ENCODE measurements at regions of chr3 and their contacts with region 1.

Region 1: DNA sequence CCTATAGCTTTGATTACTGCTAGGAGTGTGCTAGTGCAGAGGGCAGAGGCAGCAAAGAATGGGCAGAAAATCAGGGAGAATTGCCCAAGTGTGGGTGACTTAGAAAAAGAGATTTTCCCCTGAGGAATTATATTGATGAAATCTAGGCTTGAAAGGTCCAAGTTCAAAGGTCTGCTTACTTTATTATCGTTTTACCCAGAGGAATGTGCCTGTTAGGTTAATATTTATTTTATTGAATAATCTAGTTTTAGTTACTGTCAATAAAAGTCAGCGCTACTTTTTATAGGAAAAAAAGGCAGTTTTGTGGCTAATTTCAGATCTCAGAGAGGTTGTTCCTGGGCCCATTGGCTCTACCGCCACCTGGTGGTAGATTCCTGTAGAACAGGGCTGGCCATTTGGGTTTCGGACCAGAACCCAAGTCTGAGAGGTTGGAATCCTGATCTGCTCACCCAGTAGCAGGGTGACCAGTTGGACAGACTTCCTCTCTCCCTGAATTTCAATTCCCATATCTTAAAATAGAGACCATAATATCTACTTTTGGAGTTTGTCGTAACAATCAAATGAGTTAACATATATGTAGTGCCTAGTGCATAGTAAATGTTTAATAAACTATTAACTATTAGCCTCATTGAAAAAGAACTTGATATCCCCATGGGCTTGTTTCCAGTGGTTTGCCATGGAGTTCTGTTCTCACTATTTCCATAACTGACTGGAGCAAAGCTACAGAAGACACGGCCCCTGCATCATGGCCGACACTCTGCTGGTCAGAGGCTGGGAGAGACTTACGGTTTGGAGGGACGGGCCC is 62.7 kb upstream of the ZNF148 start:
- DNase-seq: peak; percentile 56
- H3K4me3 ChIP-seq: no peak overlapping the region
- H3K27ac ChIP-seq: no peak overlapping the region
- H3K4me1 ChIP-seq: peaks cover 0 to 9% (median 0%) of the 10 kb centered on the region in 4 donors
- H3K27me3 ChIP-seq: no peaks in the 10 kb centered on the region
- CTCF ChIP-seq: peak; percentile 87 to 97 (median 96)
- EP300 ChIP-seq: no peak
- POLR2A ChIP-seq: no peak

Region 2: GRCh38 chr3:124761250-124761796 is 676.5 kb before region 1 on chr3:
- in situ Hi-C with region 1: loop called in 1 of 4 experiments (anchors 25 kb)
- intact Hi-C with region 1: no loop called
- DNase-seq: peak; percentile 89
- H3K4me3 ChIP-seq: no peak overlapping the region
- H3K27ac ChIP-seq: peak overlapping the region in 3 of 4 donors; percentile 26 to 50 (median 42)
- H3K4me1 ChIP-seq: peaks cover 0 to 11% (median 8%) of the 10 kb centered on the region in 4 donors
- H3K27me3 ChIP-seq: no peaks in the 10 kb centered on the region
- CTCF ChIP-seq: peak; percentile 91 to 98 (median 94)
- EP300 ChIP-seq: no peak
- POLR2A ChIP-seq: no peak

Region 3: DNA sequence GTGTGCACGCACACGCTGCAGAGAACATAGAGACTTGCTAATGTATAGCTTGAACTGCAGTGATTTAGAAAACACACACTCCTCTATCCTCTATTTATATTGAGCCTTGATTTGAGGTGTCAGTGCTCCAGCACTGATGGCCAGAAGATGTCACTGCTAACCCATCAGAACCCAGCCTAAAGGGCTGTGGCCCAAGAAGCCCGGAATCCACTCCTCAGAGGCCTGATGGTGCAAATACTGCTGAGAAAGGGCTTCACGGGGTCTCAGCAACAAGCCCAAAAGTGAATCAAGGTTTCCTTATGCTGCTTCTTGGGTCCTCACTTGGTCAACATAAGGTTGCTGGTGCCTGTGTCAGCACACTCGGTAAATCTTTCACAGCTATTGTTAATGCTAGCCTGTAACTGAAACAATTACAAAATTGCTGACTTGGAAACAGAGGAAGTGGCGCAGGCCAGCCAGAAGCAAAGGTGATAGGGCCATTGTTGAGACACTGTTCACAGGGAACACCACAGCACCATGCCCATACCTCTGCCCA is 442.3 kb before region 1 on chr3:
- in situ Hi-C with region 1: loop called in 3 of 4 experiments (anchors 10 kb)
- intact Hi-C with region 1: loop called (anchors 1 kb)
- DNase-seq: peak; percentile 65
- H3K4me3 ChIP-seq: no peak overlapping the region
- H3K27ac ChIP-seq: peak overlapping the region; percentile 8 to 54 (median 32)
- H3K4me1 ChIP-seq: peaks cover 0 to 35% (median 8%) of the 10 kb centered on the region in 4 donors
- H3K27me3 ChIP-seq: no peaks in the 10 kb centered on the region
- CTCF ChIP-seq: peak; percentile 66 to 77 (median 67)
- EP300 ChIP-seq: no peak
- POLR2A ChIP-seq: no peak

Region 4: GRCh38 chr3:125150525-125151441 is 287.1 kb before region 1 on chr3:
- in situ Hi-C with region 1: loop called in 1 of 4 experiments (anchors 25 kb)
- intact Hi-C with region 1: no loop called
- DNase-seq: peak; percentile 58
- H3K4me3 ChIP-seq: no peak overlapping the region
- H3K27ac ChIP-seq: no peak overlapping the region
- H3K4me1 ChIP-seq: peaks cover 0 to 11% (median 0%) of the 10 kb centered on the region in 4 donors
- H3K27me3 ChIP-seq: no peaks in the 10 kb centered on the region
- CTCF ChIP-seq: peak; percentile 44 to 60 (median 59)
- EP300 ChIP-seq: no peak
- POLR2A ChIP-seq: no peak

Measured in transverse colon (tissue), 4 donors.